Dendritic cell treated with granulocyte-macrophage colony-stimulating factor and Interleukin-4, amounts not matched to agents 40 ng/mL and 50 ng/mL, for 4 days (primary cell): ENCODE measurements at regions of chr15 and their contacts with region 1.

Region 1: DNA sequence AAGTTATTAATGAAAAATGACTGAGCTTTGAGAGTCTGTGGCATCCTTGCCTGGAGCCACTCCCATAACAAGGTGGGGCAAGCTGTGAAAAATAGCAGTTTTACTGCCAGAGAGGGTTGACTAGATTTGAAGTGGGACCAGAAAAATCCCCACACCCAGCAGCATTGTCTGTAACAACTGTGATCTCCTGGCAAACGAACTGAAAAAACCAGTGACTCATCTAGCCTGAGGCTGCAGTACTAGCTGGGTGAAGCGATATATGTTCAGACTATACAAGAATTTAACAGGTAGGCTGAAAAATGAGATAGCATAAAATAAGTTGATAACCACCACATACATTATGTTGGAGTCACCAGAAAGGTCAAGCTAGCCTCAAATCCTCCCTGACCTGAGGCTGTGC is 64.0 kb downstream of the DPH6 start:
- H3K4me3 Mint-ChIP-seq: no peak overlapping the region
- H3K27ac Mint-ChIP-seq: no peak overlapping the region
- H3K4me1 Mint-ChIP-seq: no peaks in the 10 kb centered on the region
- H3K27me3 Mint-ChIP-seq: no peaks in the 10 kb centered on the region

Region 2: DNA sequence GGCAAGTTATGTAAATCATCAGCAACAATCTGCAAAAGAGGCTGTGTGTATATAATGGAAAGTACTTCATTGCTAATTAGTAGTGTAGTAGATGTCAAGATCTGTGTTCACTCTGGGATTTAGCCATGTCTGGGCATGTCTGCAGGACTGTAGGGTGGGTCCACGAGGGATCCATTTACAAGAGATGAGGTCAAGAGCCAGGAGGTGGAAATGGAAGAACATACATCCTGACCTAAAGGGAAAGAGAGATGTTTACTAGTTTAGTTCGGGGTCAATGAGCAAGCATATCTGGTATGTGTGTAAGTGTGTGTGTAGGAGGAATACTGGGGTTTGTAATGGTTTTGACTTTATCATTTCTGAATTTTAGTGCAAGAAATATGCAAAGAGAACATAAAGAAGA is 225.4 kb before region 1 on chr15:
- intact Hi-C with region 1: no loop called
- H3K4me3 Mint-ChIP-seq: no peak overlapping the region
- H3K27ac Mint-ChIP-seq: no peak overlapping the region
- H3K4me1 Mint-ChIP-seq: no peaks in the 10 kb centered on the region
- H3K27me3 Mint-ChIP-seq: no peaks in the 10 kb centered on the region

Region 3: DNA sequence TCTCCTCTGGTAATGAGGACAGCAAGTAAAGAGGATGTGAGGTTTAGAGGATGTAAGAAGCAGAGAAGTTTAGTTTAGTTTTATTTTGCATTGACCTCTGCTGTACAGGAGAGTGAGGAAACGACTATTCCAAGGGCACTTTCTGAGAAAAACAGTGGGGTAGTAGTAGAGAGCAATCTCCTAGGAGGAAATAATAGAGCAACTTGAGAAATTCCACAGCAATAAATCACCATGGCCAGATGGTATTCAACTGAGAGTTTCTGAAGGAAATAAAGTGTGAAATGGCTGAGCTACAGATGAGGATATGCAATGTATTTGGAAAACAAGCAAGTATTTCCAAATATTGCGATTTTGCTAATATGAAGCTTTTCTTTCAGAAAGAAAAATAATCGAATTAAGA is 54.9 kb before region 1 on chr15:
- intact Hi-C with region 1: loop called (anchors 10 kb)
- H3K4me3 Mint-ChIP-seq: no peak overlapping the region
- H3K27ac Mint-ChIP-seq: no peak overlapping the region
- H3K4me1 Mint-ChIP-seq: no peaks in the 10 kb centered on the region
- H3K27me3 Mint-ChIP-seq: no peaks in the 10 kb centered on the region

Region 4: DNA sequence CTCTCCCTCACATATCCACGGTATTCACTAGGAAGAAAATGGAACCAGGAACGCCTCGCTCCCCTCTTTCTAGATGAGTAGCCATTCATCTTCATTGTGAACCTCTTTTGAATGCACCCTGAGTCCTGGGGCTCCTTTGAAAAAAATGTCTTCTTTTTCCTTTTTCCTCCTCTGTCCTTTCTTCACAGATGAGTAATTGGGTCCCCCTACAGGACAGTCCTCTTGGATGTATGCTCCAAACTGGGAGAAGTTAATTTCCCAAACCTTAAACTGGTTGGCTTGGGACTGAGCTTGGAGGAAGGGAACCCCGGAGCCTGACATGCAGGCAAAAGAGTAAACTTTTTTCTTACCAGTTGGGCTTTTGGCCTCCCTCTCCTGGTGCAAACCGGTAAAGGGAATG is 44.8 kb before region 1 on chr15:
- intact Hi-C with region 1: no loop called
- H3K4me3 Mint-ChIP-seq: no peak overlapping the region
- H3K27ac Mint-ChIP-seq: no peak overlapping the region
- H3K4me1 Mint-ChIP-seq: no peaks in the 10 kb centered on the region
- H3K27me3 Mint-ChIP-seq: no peaks in the 10 kb centered on the region

Region 5: GRCh38 chr15:35496585-35496984 is 14.6 kb after region 1 on chr15:
- intact Hi-C with region 1: no loop called
- H3K4me3 Mint-ChIP-seq: no peak overlapping the region
- H3K27ac Mint-ChIP-seq: no peak overlapping the region
- H3K4me1 Mint-ChIP-seq: peaks cover 5% of the 10 kb centered on the region
- H3K27me3 Mint-ChIP-seq: no peaks in the 10 kb centered on the region